ENCODE measurements at regions of chr4 and their contacts with region 1.

Region 1: DNA sequence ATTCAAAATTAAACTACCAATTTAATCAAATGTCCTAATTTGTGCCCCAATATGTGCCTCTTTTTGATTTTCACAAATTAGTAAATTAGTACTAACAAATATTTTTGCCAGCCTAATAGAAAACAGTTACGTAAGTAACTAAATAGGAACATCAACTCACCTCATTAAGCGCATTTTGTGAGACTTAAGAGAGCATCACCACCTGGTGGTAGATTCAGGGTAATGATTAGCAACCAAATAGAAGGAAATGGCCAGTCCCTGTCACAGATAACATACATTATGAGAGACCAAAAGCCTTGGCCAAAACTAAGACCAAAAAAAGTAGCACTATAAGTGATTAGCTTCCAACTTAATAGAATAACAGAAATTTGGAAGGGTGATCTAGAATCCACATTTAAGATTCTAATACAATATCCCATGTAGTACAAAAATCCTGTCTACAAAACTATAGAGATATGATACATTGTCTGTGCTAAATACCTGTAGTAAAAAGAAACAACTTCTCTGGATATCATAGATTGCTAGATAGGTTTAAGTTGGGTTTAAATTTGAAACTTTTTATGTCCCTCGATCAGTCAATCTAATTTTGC is 46.7 kb downstream of the C4orf46 start:
- DNase-seq: peak in 1 of 6 donors; percentile 18
- ATAC-seq: peak; percentile 69 to 91 (median 90)
- H3K4me3 ChIP-seq: no peak overlapping the region
- H3K27ac ChIP-seq: no peak overlapping the region
- H3K4me1 ChIP-seq: no peaks in the 10 kb centered on the region
- H3K27me3 ChIP-seq: no peaks in the 10 kb centered on the region
- CTCF ChIP-seq: peak; percentile 36 to 62 (median 46)

Region 2: GRCh38 chr4:158253350-158253980 is 371.5 kb before region 1 on chr4:
- intact Hi-C with region 1: loop called in 1 of 3 experiments (anchors 10 kb)
- DNase-seq: peak in 3 of 6 donors; percentile 42 to 52 (median 43)
- ATAC-seq: peak; percentile 55 to 86 (median 82)
- H3K4me3 ChIP-seq: no peak overlapping the region
- H3K27ac ChIP-seq: no peak overlapping the region
- H3K4me1 ChIP-seq: peaks cover 0 to 3% (median 3%) of the 10 kb centered on the region in 3 donors
- H3K27me3 ChIP-seq: no peaks in the 10 kb centered on the region
- CTCF ChIP-seq: peak in 3 of 4 donors; percentile 30 to 52 (median 39)

Measured in pancreas (tissue), 10 donors.